Activated CD8-positive, alpha-beta T cell treated with anti-CD3 and anti-CD28 coated beads for 36 hours (primary cell): ENCODE measurements at regions of chr12 and their contacts with region 1.

Region 1: GRCh38 chr12:48758221-48758620 is 30.7 kb downstream of the ADCY6 start:
- DNase-seq: no peak
- ATAC-seq: no peak
- H3K4me3 Mint-ChIP-seq: no peak overlapping the region
- H3K27ac Mint-ChIP-seq: no peak overlapping the region
- H3K4me1 Mint-ChIP-seq: no peaks in the 10 kb centered on the region
- H3K27me3 Mint-ChIP-seq: peaks cover 2% of the 10 kb centered on the region
- CTCF ChIP-seq: no peak

Region 2: GRCh38 chr12:48788854-48789796 is 30.9 kb after region 1 on chr12 and contains the start of gene ADCY6:
- CTCF ChIA-PET with region 1: interaction called, 204 read pairs
- POLR2A ChIA-PET with region 1: no interaction called
- intact Hi-C with region 1: no loop called
- DNase-seq: no peak
- ATAC-seq: no peak
- H3K4me3 Mint-ChIP-seq: peak within 1 kb of the TSS; percentile 47
- H3K27ac Mint-ChIP-seq: no peak within 1 kb of the TSS
- H3K4me1 Mint-ChIP-seq: peaks cover 5% of the 10 kb centered on the region
- H3K27me3 Mint-ChIP-seq: peaks cover 44% of the 10 kb centered on the region
- CTCF ChIP-seq: no peak
- total RNA-seq, gene ADCY6: not detected

Region 3: GRCh38 chr12:48814262-48815125 is 56.3 kb after region 1 on chr12:
- CTCF ChIA-PET with region 1: interaction called, 41 read pairs
- POLR2A ChIA-PET with region 1: no interaction called
- intact Hi-C with region 1: no loop called
- DNase-seq: peak; percentile 86
- ATAC-seq: peak; percentile 83
- H3K4me3 Mint-ChIP-seq: peak overlapping the region; percentile 95
- H3K27ac Mint-ChIP-seq: peak overlapping the region; percentile 67
- H3K4me1 Mint-ChIP-seq: peaks cover 34% of the 10 kb centered on the region
- H3K27me3 Mint-ChIP-seq: peaks cover 19% of the 10 kb centered on the region
- CTCF ChIP-seq: peak; percentile 100